Left colon (tissue), 2 donors: ENCODE measurements at regions of chr11 and their contacts with region 1.

Region 1: DNA sequence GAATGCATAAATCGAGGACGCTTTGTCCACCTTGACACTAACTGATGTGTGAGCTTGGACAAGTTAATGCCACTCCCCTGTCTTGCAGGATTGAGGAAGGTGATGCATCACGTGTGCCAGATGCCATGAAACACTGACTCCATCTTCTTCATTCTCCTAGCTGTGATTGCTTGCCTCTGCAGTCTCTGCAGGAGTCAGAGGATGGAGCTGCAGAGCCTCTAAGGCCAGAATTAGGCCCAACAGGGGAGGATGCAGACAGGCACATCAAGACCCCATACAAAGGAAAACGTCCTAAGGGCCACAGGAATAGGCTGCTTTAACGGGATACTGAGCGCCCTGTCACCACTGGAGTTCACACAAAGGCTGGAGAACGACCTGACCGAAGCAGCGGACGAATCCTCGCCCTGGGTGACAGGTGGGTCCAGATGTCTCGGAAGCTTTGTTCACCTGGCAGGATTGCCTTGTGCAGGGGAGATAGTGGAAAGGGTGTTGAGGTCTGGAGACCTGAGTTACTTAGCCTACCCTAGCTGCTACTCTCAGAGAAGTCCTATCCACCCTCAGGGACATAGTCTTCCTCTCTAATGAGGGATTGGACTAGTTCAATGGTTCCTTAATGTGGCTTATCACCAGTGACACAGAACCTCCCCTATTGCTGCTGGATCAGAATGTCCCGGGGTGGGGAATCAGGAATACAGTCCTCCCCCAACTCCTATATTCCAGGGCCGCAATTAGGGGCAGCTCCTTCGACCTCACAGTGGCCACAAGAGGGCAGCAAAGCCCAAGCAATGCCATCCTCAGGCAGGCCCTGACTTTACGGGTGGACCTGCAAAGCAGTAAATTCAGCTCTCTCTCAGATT is 32.4 kb downstream of the DBX1 start:
- DNase-seq: peak; percentile 61 to 86
- ATAC-seq: peak; percentile 75

Region 2: GRCh38 chr11:20337526-20338154 is 209.7 kb after region 1 on chr11:
- intact Hi-C with region 1: no loop called
- DNase-seq: no peak
- ATAC-seq: peak; percentile 58

Region 3: DNA sequence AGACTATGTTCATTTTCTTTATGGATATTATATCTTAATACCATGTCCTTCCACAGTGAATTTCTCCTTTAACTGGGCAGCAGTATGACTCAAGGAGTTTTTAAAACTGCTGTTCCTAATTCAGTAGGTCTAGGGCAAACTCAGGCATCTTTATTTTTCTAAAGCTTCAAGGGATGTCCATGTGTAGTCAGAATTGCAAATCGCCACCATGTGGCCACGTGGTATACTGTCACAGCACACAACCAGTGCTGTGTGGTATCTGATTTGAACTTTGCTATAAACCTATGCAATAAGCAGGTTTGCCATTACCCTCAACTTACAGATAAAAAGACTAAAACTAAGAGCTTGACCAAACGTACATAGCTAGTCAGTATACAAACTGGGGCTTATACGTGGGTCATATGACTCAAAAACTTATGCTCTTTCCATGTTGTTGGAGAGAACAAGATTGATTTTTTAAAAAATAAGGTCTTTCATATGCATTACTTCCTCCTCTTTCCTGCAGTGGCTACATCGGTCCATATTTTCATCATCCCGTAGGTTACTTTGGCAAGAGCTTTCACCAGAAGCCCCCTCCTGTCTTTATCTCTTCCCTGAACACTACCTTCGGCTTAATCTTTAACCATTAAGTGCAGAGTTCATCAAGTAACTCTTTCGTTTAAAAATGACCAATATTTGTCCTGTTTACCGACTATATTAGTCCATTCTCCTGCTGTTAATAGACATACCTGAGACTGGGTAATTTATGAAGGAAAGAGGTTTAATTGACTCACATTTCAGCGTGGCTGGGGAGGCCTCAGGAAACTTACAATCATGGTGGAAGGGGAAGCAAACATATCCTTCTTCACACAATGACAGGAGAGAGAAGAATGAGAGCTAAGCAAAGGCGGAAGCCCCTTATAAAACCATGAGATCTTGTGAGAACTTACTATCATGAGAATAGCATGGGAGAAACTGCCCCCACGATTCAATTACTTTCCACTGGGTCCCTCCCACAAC is 227.6 kb after region 1 on chr11:
- intact Hi-C with region 1: loop called (anchors 5 to 10 kb)
- DNase-seq: peak; percentile 33 to 59
- ATAC-seq: peak; percentile 85